GM10248 (cell line): ENCODE measurements at regions of chr3 and their contacts with region 1.

Region 1: GRCh38 chr3:141561426-141562034 is 74.7 kb downstream of the RASA2 start:
- DNase-seq: peak; percentile 27
- CTCF ChIP-seq: peak; percentile 86

Region 2: GRCh38 chr3:141547791-141548190 is 13.7 kb before region 1 on chr3:
- CTCF ChIA-PET with region 1: interaction called, 14 read pairs
- POLR2A ChIA-PET with region 1: no interaction called
- DNase-seq: no peak
- CTCF ChIP-seq: no peak

Region 3: GRCh38 chr3:141729240-141729639 is 167.7 kb after region 1 on chr3:
- CTCF ChIA-PET with region 1: no interaction called
- POLR2A ChIA-PET with region 1: no interaction called
- DNase-seq: no peak
- CTCF ChIP-seq: no peak

Region 4: DNA sequence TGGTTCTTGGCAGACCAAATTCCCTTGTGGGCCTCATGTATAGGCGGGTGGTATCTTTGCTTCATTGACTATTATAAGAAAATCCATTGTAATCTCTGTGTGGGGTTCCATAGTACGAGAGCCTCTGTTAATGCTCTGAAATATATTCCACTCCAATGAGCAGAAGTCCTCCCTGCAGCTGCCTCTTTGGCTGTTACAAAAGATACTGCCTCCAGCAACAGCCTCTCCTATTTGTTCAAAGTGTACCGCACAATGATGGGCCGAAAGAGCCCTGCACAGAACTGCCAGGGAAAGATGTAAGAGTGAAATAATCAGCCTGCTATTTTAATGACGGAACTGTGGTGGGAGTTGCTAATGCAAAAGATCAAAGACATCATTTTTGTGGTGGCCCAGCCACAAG is 250.6 kb after region 1 on chr3:
- CTCF ChIA-PET with region 1: no interaction called
- POLR2A ChIA-PET with region 1: no interaction called
- DNase-seq: no peak
- CTCF ChIP-seq: no peak